ENCODE measurements at regions of chr22 and their contacts with region 1.

Region 1: GRCh38 chr22:44684506-44685383 is 17.3 kb upstream of the PRR5 start:
- DNase-seq: peak; percentile 63
- ATAC-seq: peak; percentile 81
- H3K4me3 ChIP-seq: no peak overlapping the region
- H3K27ac ChIP-seq: no peak overlapping the region; the same call in 1 of the 2 replicates
- H3K4me1 ChIP-seq: peaks cover 46% of the 10 kb centered on the region
- H3K27me3 ChIP-seq: no peaks in the 10 kb centered on the region
- CTCF ChIP-seq: peak; percentile 96 to 99 (median 98); a peak in 5 of 6 replicates
- EP300 ChIP-seq: no peak
- POLR2A ChIP-seq: no peak
- RAD21 ChIP-seq: peak; percentile 57

Region 2: DNA sequence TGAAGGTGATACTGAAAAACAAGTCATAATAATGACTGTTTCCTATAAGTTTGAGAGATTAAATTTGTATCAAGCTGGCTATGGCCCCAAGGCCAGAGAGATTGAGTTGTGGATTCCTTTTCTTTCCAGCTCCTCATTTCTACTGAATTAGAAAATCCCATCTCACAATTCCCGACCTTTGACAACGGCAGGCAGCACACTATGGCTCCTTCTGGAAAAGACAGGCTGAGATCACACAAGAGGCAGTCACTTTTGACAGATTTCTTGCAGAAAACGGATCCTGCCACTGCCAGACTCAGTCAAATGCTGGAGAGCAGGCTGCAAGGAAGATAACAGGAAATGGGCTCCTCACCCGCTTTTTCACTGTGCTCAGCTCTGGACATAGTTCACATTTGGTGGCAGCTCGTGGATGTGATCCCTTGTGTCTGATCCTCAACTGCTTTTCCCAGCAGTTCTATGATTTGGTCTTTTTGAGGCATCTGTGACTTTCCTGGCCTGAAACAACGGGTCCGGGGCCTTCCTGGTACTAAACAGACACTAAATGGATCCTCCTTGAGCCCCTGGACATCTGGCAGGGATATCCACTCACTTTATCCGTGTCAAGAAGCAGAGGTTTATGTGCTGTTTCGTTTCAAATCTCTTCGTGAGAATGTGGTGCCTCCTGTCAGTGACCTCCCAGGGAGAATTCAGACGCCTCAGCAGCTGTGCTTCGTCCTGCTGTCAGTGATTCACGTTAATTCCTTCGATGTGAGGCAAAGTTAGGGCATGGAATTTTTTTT is 160.6 kb before region 1 on chr22:
- CTCF ChIA-PET with region 1: no interaction called
- POLR2A ChIA-PET with region 1: no interaction called
- RAD21 ChIA-PET with region 1: no interaction called
- SMC1A ChIA-PET with region 1: no interaction called
- in situ Hi-C with region 1: no loop called
- intact Hi-C with region 1: no loop called
- DNase-seq: no peak
- ATAC-seq: no peak
- H3K4me3 ChIP-seq: no peak overlapping the region
- H3K27ac ChIP-seq: no peak overlapping the region
- H3K4me1 ChIP-seq: no peaks in the 10 kb centered on the region
- H3K27me3 ChIP-seq: peaks cover 0 to 3% of the 10 kb centered on the region in 2 experiments; a peak in 2 of 4 replicates
- CTCF ChIP-seq: no peak
- EP300 ChIP-seq: no peak
- POLR2A ChIP-seq: no peak
- RAD21 ChIP-seq: no peak

Region 3: GRCh38 chr22:44625981-44626687 is 58.6 kb before region 1 on chr22:
- CTCF ChIA-PET with region 1: interaction called, 17 read pairs
- POLR2A ChIA-PET with region 1: no interaction called
- RAD21 ChIA-PET with region 1: interaction called, 4 read pairs
- SMC1A ChIA-PET with region 1: no interaction called
- in situ Hi-C with region 1: no loop called
- intact Hi-C with region 1: no loop called
- DNase-seq: peak; percentile 15
- ATAC-seq: peak; percentile 94
- H3K4me3 ChIP-seq: no peak overlapping the region
- H3K27ac ChIP-seq: no peak overlapping the region
- H3K4me1 ChIP-seq: no peaks in the 10 kb centered on the region
- H3K27me3 ChIP-seq: no peaks in the 10 kb centered on the region
- CTCF ChIP-seq: peak; percentile 89 to 99 (median 92)
- EP300 ChIP-seq: no peak
- POLR2A ChIP-seq: no peak
- RAD21 ChIP-seq: peak; percentile 97

Region 4: DNA sequence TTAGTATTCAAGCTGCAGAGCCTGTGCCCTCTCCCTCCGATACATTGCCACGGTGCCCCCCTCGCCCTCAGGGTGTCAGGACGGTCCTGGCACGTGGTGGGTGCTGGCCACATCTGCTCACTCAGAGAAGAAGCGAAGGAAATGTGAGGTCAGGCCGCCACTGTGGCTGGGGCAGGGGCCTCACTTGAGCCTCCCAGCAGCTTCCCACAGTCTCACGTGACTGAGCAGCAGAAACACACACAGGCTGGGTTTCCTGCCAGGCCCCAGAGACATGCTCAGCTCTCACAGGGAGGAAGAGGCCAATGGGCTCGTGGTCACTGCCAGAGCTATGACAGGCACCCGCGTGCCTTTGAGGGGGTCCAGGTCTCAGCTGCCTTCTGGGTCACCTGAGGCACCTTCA is 20.6 kb before region 1 on chr22:
- CTCF ChIA-PET with region 1: interaction called, 13 read pairs
- POLR2A ChIA-PET with region 1: no interaction called
- RAD21 ChIA-PET with region 1: interaction called, 9 read pairs
- SMC1A ChIA-PET with region 1: interaction called, 8 read pairs
- in situ Hi-C with region 1: no loop called
- intact Hi-C with region 1: no loop called
- DNase-seq: no peak
- ATAC-seq: peak; percentile 85
- H3K4me3 ChIP-seq: no peak overlapping the region
- H3K27ac ChIP-seq: no peak overlapping the region
- H3K4me1 ChIP-seq: peaks cover 5% of the 10 kb centered on the region; the same call in 1 of the 2 replicates
- H3K27me3 ChIP-seq: peaks cover 0 to 4% of the 10 kb centered on the region in 2 experiments; a peak in 3 of 4 replicates
- CTCF ChIP-seq: no peak
- EP300 ChIP-seq: no peak
- POLR2A ChIP-seq: no peak
- RAD21 ChIP-seq: no peak

Region 5: GRCh38 chr22:44701824-44702478 is 17.2 kb after region 1 on chr22 and contains the start of gene PRR5:
- CTCF ChIA-PET with region 1: interaction called, 67 read pairs
- POLR2A ChIA-PET with region 1: interaction called, 5 read pairs
- RAD21 ChIA-PET with region 1: interaction called, 4 read pairs
- SMC1A ChIA-PET with region 1: interaction called, 3 read pairs
- in situ Hi-C with region 1: no loop called
- intact Hi-C with region 1: no loop called
- DNase-seq: no peak
- ATAC-seq: peak; percentile 88
- H3K4me3 ChIP-seq: peak within 1 kb of the TSS; percentile 50; the same call in 1 of the 2 replicates
- H3K27ac ChIP-seq: no peak within 1 kb of the TSS
- H3K4me1 ChIP-seq: no peaks in the 10 kb centered on the region; the same call in none of the 2 replicates
- H3K27me3 ChIP-seq: peaks cover 0 to 8% of the 10 kb centered on the region in 2 experiments; a peak in 1 of 4 replicates
- CTCF ChIP-seq: no peak
- EP300 ChIP-seq: no peak
- POLR2A ChIP-seq: peak; percentile 42; the same call in 1 of the 2 replicates
- RAD21 ChIP-seq: no peak
- polyA plus RNA-seq, gene PRR5: 0.03 to 0.13 TPM

Region 6: GRCh38 chr22:44735540-44736488 is 51.1 kb after region 1 on chr22:
- CTCF ChIA-PET with region 1: interaction called, 28 read pairs
- POLR2A ChIA-PET with region 1: no interaction called
- RAD21 ChIA-PET with region 1: interaction called, 5 read pairs
- SMC1A ChIA-PET with region 1: interaction called, 4 read pairs
- in situ Hi-C with region 1: no loop called
- intact Hi-C with region 1: no loop called
- DNase-seq: no peak
- ATAC-seq: peak; percentile 90
- H3K4me3 ChIP-seq: no peak overlapping the region
- H3K27ac ChIP-seq: no peak overlapping the region
- H3K4me1 ChIP-seq: no peaks in the 10 kb centered on the region
- H3K27me3 ChIP-seq: no peaks in the 10 kb centered on the region
- CTCF ChIP-seq: peak; percentile 92 to 98 (median 96)
- EP300 ChIP-seq: no peak
- POLR2A ChIP-seq: no peak
- RAD21 ChIP-seq: peak; percentile 90

Measured in GM12878 (cell line).